ENCODE measurements at regions of chr10 and their contacts with region 1.

Region 1: GRCh38 chr10:89466599-89467035 is 52.2 kb downstream of the IFIT5 start:
- DNase-seq: peak; percentile 80
- H3K4me3 ChIP-seq: no peak overlapping the region
- H3K27ac ChIP-seq: no peak overlapping the region
- H3K4me1 ChIP-seq: peaks cover 40% of the 10 kb centered on the region
- H3K27me3 ChIP-seq: no peaks in the 10 kb centered on the region
- CTCF ChIP-seq: peak; percentile 52 to 53

Region 2: DNA sequence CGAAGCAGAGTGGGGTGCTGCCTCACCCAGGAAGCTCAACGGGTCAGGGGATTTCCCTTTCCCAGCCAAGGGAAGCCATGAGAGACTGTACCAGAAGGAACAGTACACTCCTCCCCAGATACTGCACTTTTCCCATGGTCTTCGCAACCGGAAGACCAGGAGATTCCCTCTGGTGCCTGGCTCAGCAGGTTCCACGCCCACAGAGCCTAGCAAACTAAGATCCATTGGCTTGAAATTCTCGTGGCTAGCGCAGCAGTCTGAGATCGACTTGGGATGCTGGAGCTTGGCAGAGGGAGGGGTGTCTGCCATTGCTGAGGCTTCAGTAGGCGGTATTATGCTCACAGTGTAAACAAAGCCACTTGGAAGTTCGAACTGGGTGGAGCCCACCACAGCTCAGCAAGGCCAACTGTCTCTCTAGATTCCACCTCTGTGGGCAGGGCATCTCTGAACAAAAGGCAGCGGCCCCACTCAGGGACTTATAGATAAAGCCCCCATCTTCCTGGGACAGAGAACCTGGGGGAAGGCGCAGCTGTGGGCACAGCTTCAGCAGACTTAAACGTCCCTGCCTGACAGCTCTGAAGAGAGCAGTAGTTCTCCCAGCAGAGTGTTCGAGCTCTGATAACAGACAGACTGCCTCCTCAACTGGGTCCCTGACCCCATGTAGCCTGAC is 39.1 kb after region 1 on chr10:
- CTCF ChIA-PET with region 1: no interaction called
- dilution Hi-C with region 1: loop called (anchors 5 kb)
- in situ Hi-C with region 1: no loop called
- intact Hi-C with region 1: no loop called
- DNase-seq: no peak
- H3K4me3 ChIP-seq: no peak overlapping the region
- H3K27ac ChIP-seq: no peak overlapping the region
- H3K4me1 ChIP-seq: no peaks in the 10 kb centered on the region
- H3K27me3 ChIP-seq: no peaks in the 10 kb centered on the region
- CTCF ChIP-seq: no peak

Region 3: GRCh38 chr10:89553064-89553734 is 86.6 kb after region 1 on chr10:
- CTCF ChIA-PET with region 1: no interaction called
- dilution Hi-C with region 1: no loop called
- in situ Hi-C with region 1: no loop called
- intact Hi-C with region 1: loop called (anchors 1 kb)
- DNase-seq: peak; percentile 88
- H3K4me3 ChIP-seq: no peak overlapping the region
- H3K27ac ChIP-seq: no peak overlapping the region
- H3K4me1 ChIP-seq: peaks cover 27% of the 10 kb centered on the region
- H3K27me3 ChIP-seq: no peaks in the 10 kb centered on the region
- CTCF ChIP-seq: no peak